Kidney (tissue), 22 donors: ENCODE measurements at regions of chr1 and their contacts with region 1.

Region 1: GRCh38 chr1:204806943-204807687 is 63.5 kb upstream of the NFASC start:
- DNase-seq: peak; percentile 88 to 92 (median 91)
- H3K4me3 ChIP-seq: peak overlapping the region; percentile 50 to 63 (median 54)
- H3K27ac ChIP-seq: no peak overlapping the region
- H3K4me1 ChIP-seq: peaks cover 0 to 16% (median 0%) of the 10 kb centered on the region in 3 donors
- H3K27me3 ChIP-seq: no peaks in the 10 kb centered on the region
- CTCF ChIP-seq: peak; percentile 88

Region 2: GRCh38 chr1:204565617-204566582 is 241.2 kb before region 1 on chr1:
- intact Hi-C with region 1: loop called (anchors 10 kb)
- DNase-seq: peak in 4 of 5 donors; percentile 70 to 86 (median 77)
- H3K4me3 ChIP-seq: no peak overlapping the region
- H3K27ac ChIP-seq: no peak overlapping the region
- H3K4me1 ChIP-seq: peaks cover 0 to 12% (median 2%) of the 10 kb centered on the region in 3 donors
- H3K27me3 ChIP-seq: no peaks in the 10 kb centered on the region
- CTCF ChIP-seq: peak; percentile 54

Region 3: GRCh38 chr1:204640578-204640977 is 166.5 kb before region 1 on chr1:
- intact Hi-C with region 1: no loop called
- DNase-seq: no peak
- H3K4me3 ChIP-seq: no peak overlapping the region
- H3K27ac ChIP-seq: no peak overlapping the region
- H3K4me1 ChIP-seq: peaks cover 5 to 13% (median 7%) of the 10 kb centered on the region in 3 donors
- H3K27me3 ChIP-seq: no peaks in the 10 kb centered on the region
- CTCF ChIP-seq: no peak

Region 4: DNA sequence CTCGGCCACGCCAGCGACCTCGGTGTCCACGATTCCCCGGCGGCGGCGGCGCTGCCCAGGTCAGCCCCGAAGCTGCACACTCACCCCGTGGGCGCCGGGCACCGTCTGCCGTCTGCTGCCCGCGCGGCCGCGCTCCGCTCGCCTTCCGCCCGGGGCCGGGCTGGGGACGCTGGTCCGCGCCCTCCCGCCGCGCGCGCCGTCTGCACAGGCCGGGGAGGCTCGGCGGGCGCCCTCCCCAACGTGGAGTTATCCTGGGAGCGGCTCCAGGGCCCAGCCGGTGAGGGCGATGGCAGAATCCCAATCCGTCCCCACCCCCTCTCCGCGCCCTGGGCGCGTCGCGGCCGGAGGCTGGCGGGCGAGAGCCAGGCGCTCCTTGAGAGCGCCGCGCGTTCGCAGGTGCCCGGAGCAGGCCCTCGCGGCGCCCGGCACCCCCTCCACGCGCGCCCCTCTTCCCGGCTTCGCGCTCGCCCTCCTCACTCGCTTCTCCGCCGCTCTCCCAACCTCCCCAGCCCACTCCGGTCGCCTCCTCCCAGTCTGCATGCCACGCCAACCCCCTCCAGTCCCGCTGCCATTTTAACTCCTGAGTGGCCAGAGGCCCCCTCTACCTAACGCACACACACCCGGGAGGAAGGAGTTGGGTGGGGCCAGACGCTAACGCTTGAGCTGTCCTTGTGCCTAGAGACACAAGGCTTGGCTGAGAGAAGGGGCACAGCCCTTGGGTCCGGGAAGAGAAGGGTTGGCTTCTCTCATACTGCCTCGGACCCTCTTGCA is 121.7 kb before region 1 on chr1 and contains the start of gene LRRN2:
- intact Hi-C with region 1: no loop called
- DNase-seq: peak in 4 of 5 donors; percentile 25 to 56 (median 39)
- H3K4me3 ChIP-seq: peak within 1 kb of the TSS; percentile 24 to 56 (median 50)
- H3K27ac ChIP-seq: no peak within 1 kb of the TSS
- H3K4me1 ChIP-seq: peaks cover 0 to 16% (median 0%) of the 10 kb centered on the region in 3 donors
- H3K27me3 ChIP-seq: peaks cover 2% of the 10 kb centered on the region
- CTCF ChIP-seq: no peak
- total RNA-seq, gene LRRN2: 14.4 TPM

Region 5: GRCh38 chr1:204941421-204942338 is 134.6 kb after region 1 on chr1:
- intact Hi-C with region 1: loop called (anchors 10 kb)
- DNase-seq: peak in 4 of 5 donors; percentile 73 to 84 (median 80)
- H3K4me3 ChIP-seq: no peak overlapping the region
- H3K27ac ChIP-seq: no peak overlapping the region
- H3K4me1 ChIP-seq: peaks cover 0 to 8% (median 0%) of the 10 kb centered on the region in 3 donors
- H3K27me3 ChIP-seq: no peaks in the 10 kb centered on the region
- CTCF ChIP-seq: peak; percentile 93